ENCODE measurements at regions of chr7 and their contacts with region 1.

Region 1: GRCh38 chr7:97857544-97857943 is 14.7 kb downstream of the ASNS start:
- DNase-seq: no peak
- H3K4me3 ChIP-seq: no peak overlapping the region
- H3K27ac ChIP-seq: no peak overlapping the region
- H3K4me1 ChIP-seq: no peaks in the 10 kb centered on the region
- H3K27me3 ChIP-seq: no peaks in the 10 kb centered on the region
- CTCF ChIP-seq: no peak
- EP300 ChIP-seq: no peak
- POLR2A ChIP-seq: no peak
- RAD21 ChIP-seq: no peak

Region 2: GRCh38 chr7:97845622-97846203 is 11.8 kb before region 1 on chr7:
- CTCF ChIA-PET with region 1: interaction called, 28 read pairs
- POLR2A ChIA-PET with region 1: interaction called, 3 read pairs
- DNase-seq: no peak
- H3K4me3 ChIP-seq: no peak overlapping the region
- H3K27ac ChIP-seq: no peak overlapping the region
- H3K4me1 ChIP-seq: no peaks in the 10 kb centered on the region
- H3K27me3 ChIP-seq: no peaks in the 10 kb centered on the region
- CTCF ChIP-seq: peak in 2 of 3 experiments; percentile 4 to 18; a peak in 2 of 4 replicates
- EP300 ChIP-seq: no peak
- POLR2A ChIP-seq: no peak
- RAD21 ChIP-seq: peak; percentile 59 to 64

Region 3: GRCh38 chr7:97872025-97872669 is 14.6 kb after region 1 on chr7 and contains the start of gene ASNS:
- CTCF ChIA-PET with region 1: no interaction called
- POLR2A ChIA-PET with region 1: interaction called, 10 read pairs
- DNase-seq: peak; percentile 86 to 96
- H3K4me3 ChIP-seq: peak within 1 kb of the TSS; percentile 65 to 92 (median 78)
- H3K27ac ChIP-seq: peak within 1 kb of the TSS; percentile 85
- H3K4me1 ChIP-seq: peaks cover 0 to 7% (median 4%) of the 10 kb centered on the region in 4 experiments; a peak in 3 of 7 replicates
- H3K27me3 ChIP-seq: peaks cover 0 to 5% (median 0%) of the 10 kb centered on the region in 4 experiments; a peak in 1 of 7 replicates
- CTCF ChIP-seq: no peak
- EP300 ChIP-seq: no peak
- POLR2A ChIP-seq: peak; percentile 76 to 96
- RAD21 ChIP-seq: no peak
- total RNA-seq, gene ASNS: 135 and 150 TPM in 2 replicates

Measured in H1 (cell line).